ENCODE measurements at regions of chr19 and their contacts with region 1.

Region 1: GRCh38 chr19:41112728-41113290 is 1.4 kb upstream of the CYP2F1 start:
- DNase-seq: no peak
- H3K4me3 ChIP-seq: no peak overlapping the region
- H3K27ac ChIP-seq: no peak overlapping the region
- H3K4me1 ChIP-seq: no peaks in the 10 kb centered on the region
- CTCF ChIP-seq: no peak

Region 2: DNA sequence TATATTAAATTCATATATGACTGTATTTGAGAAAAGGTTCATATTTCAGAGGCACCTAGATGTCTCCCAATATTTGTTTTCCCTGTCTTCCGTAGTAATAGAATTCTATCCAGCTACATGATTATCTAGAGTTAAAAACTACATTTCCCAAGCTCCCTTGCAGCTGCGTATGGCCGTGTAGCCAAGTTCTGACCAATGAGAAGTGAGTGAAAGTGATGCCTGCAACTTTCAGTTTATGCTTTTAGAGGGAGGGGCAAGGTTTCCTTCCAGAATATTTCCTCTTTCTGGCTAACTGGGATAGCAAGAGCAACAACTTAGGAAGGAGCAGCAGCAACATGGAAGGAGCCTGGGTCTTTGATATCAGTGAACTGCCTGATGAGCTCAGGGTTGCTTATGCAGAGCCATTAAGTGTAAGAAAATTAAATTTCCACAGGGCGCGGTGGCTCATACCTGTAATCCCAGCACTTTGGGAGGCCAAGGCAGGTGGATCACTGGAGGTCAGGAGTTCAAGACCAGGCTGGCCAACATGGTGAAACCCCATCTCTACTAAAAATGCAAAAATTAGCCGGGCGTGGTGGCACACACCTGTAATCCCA is 47.7 kb before region 1 on chr19:
- CTCF ChIA-PET with region 1: interaction called, 12 read pairs
- POLR2A ChIA-PET with region 1: no interaction called
- intact Hi-C with region 1: no loop called
- DNase-seq: peak; percentile 17
- H3K4me3 ChIP-seq: no peak overlapping the region
- H3K27ac ChIP-seq: no peak overlapping the region
- H3K4me1 ChIP-seq: no peaks in the 10 kb centered on the region
- CTCF ChIP-seq: no peak

Region 3: GRCh38 chr19:41133260-41133659 is 20.5 kb after region 1 on chr19:
- CTCF ChIA-PET with region 1: no interaction called
- POLR2A ChIA-PET with region 1: no interaction called
- intact Hi-C with region 1: no loop called
- DNase-seq: no peak
- H3K4me3 ChIP-seq: no peak overlapping the region
- H3K27ac ChIP-seq: no peak overlapping the region
- H3K4me1 ChIP-seq: no peaks in the 10 kb centered on the region
- CTCF ChIP-seq: no peak

Measured in OCI-LY7 (cell line).